ENCODE measurements at regions of chr14 and their contacts with region 1.

Region 1: GRCh38 chr14:50003213-50004031 is 110.5 kb downstream of the ARF6 start:
- DNase-seq: peak; percentile 94
- ATAC-seq: peak; percentile 84
- H3K4me3 ChIP-seq: peak overlapping the region; percentile 64
- H3K27ac ChIP-seq: peak overlapping the region; percentile 93
- H3K4me1 ChIP-seq: peaks cover 45% of the 10 kb centered on the region
- H3K27me3 ChIP-seq: no peaks in the 10 kb centered on the region
- CTCF ChIP-seq: peak; percentile 36

Region 2: GRCh38 chr14:49892636-49893308 is 110.7 kb before region 1 on chr14 and contains the start of gene ARF6:
- intact Hi-C with region 1: loop called (anchors 5 kb)
- DNase-seq: peak; percentile 100
- ATAC-seq: peak; percentile 98
- H3K4me3 ChIP-seq: peak within 1 kb of the TSS; percentile 86
- H3K27ac ChIP-seq: peak within 1 kb of the TSS; percentile 98
- H3K4me1 ChIP-seq: peaks cover 40% of the 10 kb centered on the region
- H3K27me3 ChIP-seq: no peaks in the 10 kb centered on the region
- CTCF ChIP-seq: peak; percentile 11
- total RNA-seq, gene ARF6: 61.5 TPM

Region 3: DNA sequence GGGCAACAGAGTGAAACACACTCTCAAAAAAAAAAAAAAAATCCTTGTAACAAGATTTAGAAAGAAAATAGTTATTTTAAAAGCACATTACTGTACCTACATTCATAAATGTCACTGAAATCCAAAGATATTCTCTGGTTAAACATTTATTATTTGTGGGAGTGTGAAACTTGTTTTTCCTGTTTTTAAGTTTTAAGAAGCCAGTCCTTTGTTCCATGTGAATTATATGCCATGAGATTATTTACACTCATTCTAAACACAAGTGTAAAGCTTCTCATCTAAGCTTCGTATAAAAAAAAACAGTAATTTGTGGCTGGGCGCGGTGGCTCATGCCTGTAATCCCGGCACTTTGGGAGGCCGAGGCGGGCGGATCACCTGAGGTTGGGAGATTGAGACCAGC is 98.0 kb after region 1 on chr14:
- intact Hi-C with region 1: loop called (anchors 5 kb)
- DNase-seq: no peak
- ATAC-seq: no peak
- H3K4me3 ChIP-seq: no peak overlapping the region
- H3K27ac ChIP-seq: no peak overlapping the region
- H3K4me1 ChIP-seq: no peaks in the 10 kb centered on the region
- H3K27me3 ChIP-seq: no peaks in the 10 kb centered on the region
- CTCF ChIP-seq: no peak

Measured in upper lobe of right lung (tissue), 1 donor.